Heart left ventricle (tissue), 16 donors: ENCODE measurements at regions of chr20 and their contacts with region 1.

Region 1: GRCh38 chr20:20802328-20802727 is 89.9 kb upstream of the RALGAPA2 start:
- DNase-seq: no peak
- ATAC-seq: peak in 1 of 4 donors; percentile 78
- H3K4me3 ChIP-seq: no peak overlapping the region
- H3K27ac ChIP-seq: no peak overlapping the region
- H3K4me1 ChIP-seq: peaks cover 0 to 6% (median 0%) of the 10 kb centered on the region in 12 donors
- H3K27me3 ChIP-seq: no peaks in the 10 kb centered on the region
- CTCF ChIP-seq: no peak
- POLR2A ChIP-seq: no peak

Region 2: GRCh38 chr20:20743511-20744169 is 58.7 kb before region 1 on chr20:
- intact Hi-C with region 1: loop called in 1 of 10 experiments (anchors 10 kb)
- DNase-seq: peak; percentile 63 to 85 (median 78)
- ATAC-seq: peak; percentile 83 to 96 (median 92)
- H3K4me3 ChIP-seq: peak overlapping the region in 5 of 12 donors; percentile 2 to 24 (median 15)
- H3K27ac ChIP-seq: peak overlapping the region; percentile 49 to 93 (median 86)
- H3K4me1 ChIP-seq: peaks cover 5 to 37% (median 29%) of the 10 kb centered on the region in 12 donors
- H3K27me3 ChIP-seq: no peaks in the 10 kb centered on the region
- CTCF ChIP-seq: no peak
- POLR2A ChIP-seq: no peak

Region 3: GRCh38 chr20:20759132-20759531 is 43.2 kb before region 1 on chr20:
- intact Hi-C with region 1: loop called in 1 of 10 experiments (anchors 10 kb)
- DNase-seq: no peak
- ATAC-seq: peak in 2 of 4 donors; percentile 36 to 45
- H3K4me3 ChIP-seq: no peak overlapping the region
- H3K27ac ChIP-seq: peak overlapping the region in 11 of 12 donors; percentile 12 to 78 (median 48)
- H3K4me1 ChIP-seq: peaks cover 0 to 28% (median 2%) of the 10 kb centered on the region in 12 donors
- H3K27me3 ChIP-seq: no peaks in the 10 kb centered on the region
- CTCF ChIP-seq: no peak
- POLR2A ChIP-seq: no peak

Region 4: GRCh38 chr20:20971810-20972209 is 169.5 kb after region 1 on chr20:
- intact Hi-C with region 1: no loop called
- DNase-seq: no peak
- ATAC-seq: no peak
- H3K4me3 ChIP-seq: no peak overlapping the region
- H3K27ac ChIP-seq: no peak overlapping the region
- H3K4me1 ChIP-seq: no peaks in the 10 kb centered on the region
- H3K27me3 ChIP-seq: peaks cover 0 to 9% (median 0%) of the 10 kb centered on the region in 9 donors
- CTCF ChIP-seq: no peak
- POLR2A ChIP-seq: no peak

Region 5: GRCh38 chr20:21156266-21156665 is 353.9 kb after region 1 on chr20:
- intact Hi-C with region 1: no loop called
- DNase-seq: no peak
- ATAC-seq: no peak
- H3K4me3 ChIP-seq: no peak overlapping the region
- H3K27ac ChIP-seq: peak overlapping the region in 1 of 12 donors; percentile 86
- H3K4me1 ChIP-seq: no peaks in the 10 kb centered on the region
- H3K27me3 ChIP-seq: no peaks in the 10 kb centered on the region
- CTCF ChIP-seq: no peak
- POLR2A ChIP-seq: no peak

Region 6: GRCh38 chr20:21450572-21450971 is 648.2 kb after region 1 on chr20:
- intact Hi-C with region 1: no loop called
- DNase-seq: no peak
- ATAC-seq: no peak
- H3K4me3 ChIP-seq: no peak overlapping the region
- H3K27ac ChIP-seq: no peak overlapping the region
- H3K4me1 ChIP-seq: no peaks in the 10 kb centered on the region
- H3K27me3 ChIP-seq: peaks cover 0 to 30% (median 0%) of the 10 kb centered on the region in 9 donors
- CTCF ChIP-seq: no peak
- POLR2A ChIP-seq: no peak